Posterior vena cava (tissue), 2 donors: ENCODE measurements at regions of chr2 and their contacts with region 1.

Region 1: GRCh38 chr2:45554073-45554741 is 56.9 kb downstream of the SRBD1 start:
- DNase-seq: no peak

Region 2: GRCh38 chr2:43754180-43754579 is 1800.0 kb before region 1 on chr2:
- intact Hi-C with region 1: loop called in 1 of 2 experiments (anchors 5 kb)
- DNase-seq: no peak

Region 3: DNA sequence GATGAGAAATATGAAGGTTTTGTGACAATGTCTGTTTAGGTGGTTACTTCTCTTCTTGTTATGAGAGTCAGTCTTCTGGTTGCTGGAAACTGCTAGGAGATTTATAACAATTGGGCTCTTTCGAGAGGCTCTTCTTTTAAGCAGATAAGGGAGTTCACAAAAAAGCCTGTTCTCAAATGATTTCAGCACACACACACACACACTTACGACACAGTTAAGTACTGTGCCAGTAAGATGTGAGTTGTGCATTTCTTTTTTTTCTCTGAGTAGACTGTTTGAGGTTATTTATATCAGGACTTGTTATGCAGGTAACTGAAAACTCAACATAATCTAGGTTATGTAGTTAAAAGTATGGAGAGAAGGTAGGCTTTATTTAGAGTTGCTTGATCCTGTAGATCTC is 1898.6 kb after region 1 on chr2:
- intact Hi-C with region 1: no loop called
- DNase-seq: no peak